K562 (cell line): ENCODE measurements at regions of chr19 and their contacts with region 1.

Region 1: GRCh38 chr19:2475702-2476450 is at the start of gene GADD45B:
- DNase-seq: peak; percentile 97 to 100 (median 98)
- ATAC-seq: peak; percentile 88
- H3K4me3 ChIP-seq: peak within 1 kb of the TSS; percentile 49
- H3K27ac ChIP-seq: peak within 1 kb of the TSS; percentile 25; the same call in 1 of the 3 replicates
- H3K4me1 ChIP-seq: peaks cover 2 to 46% of the 10 kb centered on the region in 2 experiments; a peak in 4 of 5 replicates
- H3K27me3 ChIP-seq: peaks cover 0 to 9% of the 10 kb centered on the region in 2 experiments; a peak in 2 of 5 replicates
- CTCF ChIP-seq: no peak
- EP300 ChIP-seq: no peak
- POLR2A ChIP-seq: peak; percentile 99
- RAD21 ChIP-seq: peak; percentile 11 to 20; a peak in 2 of 4 replicates
- polyA plus RNA-seq, gene GADD45B: 0.06 to 0.18 TPM

Region 2: DNA sequence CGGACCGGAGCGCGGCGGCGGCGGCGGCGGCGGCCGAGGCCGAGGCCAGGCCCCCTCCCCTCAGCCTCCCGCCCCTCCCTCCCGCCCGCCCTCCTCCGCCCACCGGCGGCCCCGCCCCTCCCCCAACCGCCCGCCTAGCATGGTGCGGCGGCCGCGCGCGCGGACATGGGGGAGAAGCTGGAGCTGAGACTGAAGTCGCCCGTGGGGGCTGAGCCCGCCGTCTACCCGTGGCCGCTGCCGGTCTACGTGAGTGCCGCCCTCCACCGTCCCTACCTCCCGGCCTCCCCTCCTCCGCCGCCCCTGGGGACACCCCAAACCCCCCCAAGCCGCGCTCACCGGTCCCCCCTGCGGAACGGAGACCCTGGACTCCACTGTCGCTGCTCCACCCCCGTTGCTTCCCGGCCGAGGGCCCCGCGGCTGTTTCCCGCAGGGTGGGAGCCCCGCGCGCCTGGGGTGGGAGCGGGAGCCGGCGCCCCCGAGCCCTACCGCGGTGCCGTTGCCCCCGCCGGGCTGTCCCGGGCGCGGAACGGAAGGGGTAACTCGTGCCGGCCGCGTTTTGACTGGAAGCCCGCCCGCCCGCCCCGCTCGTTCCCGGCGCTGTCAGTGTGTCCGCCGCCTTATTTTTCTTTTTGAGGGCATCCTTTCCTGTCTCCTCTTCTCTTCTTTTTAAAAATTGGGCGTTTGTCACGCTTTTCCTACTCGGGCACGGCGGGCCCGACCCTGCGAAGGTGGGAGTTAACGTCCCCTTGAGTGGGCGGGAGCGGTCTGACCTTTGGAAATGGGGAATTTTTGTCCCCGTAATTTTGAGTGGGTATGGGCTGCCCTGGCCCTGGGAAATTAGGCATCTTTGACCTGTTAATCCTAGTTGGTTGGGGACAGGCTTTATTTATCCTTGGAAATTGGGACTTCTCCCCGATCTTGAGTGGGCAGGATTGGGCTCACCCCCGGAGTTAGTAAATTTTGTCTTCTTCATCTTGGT is 311.6 kb before region 1 on chr19:
- CTCF ChIA-PET with region 1: no interaction called
- POLR2A ChIA-PET with region 1: no interaction called
- in situ Hi-C with region 1: no loop called
- intact Hi-C with region 1: no loop called
- DNase-seq: peak in 2 of 4 experiments; percentile 23 to 45
- ATAC-seq: peak; percentile 2
- H3K4me3 ChIP-seq: peak overlapping the region; percentile 100
- H3K27ac ChIP-seq: peak overlapping the region; percentile 98
- H3K4me1 ChIP-seq: peaks cover 42 to 74% of the 10 kb centered on the region in 2 experiments
- H3K27me3 ChIP-seq: no peaks in the 10 kb centered on the region
- CTCF ChIP-seq: no peak
- EP300 ChIP-seq: no peak
- POLR2A ChIP-seq: peak; percentile 53
- RAD21 ChIP-seq: no peak

Region 3: DNA sequence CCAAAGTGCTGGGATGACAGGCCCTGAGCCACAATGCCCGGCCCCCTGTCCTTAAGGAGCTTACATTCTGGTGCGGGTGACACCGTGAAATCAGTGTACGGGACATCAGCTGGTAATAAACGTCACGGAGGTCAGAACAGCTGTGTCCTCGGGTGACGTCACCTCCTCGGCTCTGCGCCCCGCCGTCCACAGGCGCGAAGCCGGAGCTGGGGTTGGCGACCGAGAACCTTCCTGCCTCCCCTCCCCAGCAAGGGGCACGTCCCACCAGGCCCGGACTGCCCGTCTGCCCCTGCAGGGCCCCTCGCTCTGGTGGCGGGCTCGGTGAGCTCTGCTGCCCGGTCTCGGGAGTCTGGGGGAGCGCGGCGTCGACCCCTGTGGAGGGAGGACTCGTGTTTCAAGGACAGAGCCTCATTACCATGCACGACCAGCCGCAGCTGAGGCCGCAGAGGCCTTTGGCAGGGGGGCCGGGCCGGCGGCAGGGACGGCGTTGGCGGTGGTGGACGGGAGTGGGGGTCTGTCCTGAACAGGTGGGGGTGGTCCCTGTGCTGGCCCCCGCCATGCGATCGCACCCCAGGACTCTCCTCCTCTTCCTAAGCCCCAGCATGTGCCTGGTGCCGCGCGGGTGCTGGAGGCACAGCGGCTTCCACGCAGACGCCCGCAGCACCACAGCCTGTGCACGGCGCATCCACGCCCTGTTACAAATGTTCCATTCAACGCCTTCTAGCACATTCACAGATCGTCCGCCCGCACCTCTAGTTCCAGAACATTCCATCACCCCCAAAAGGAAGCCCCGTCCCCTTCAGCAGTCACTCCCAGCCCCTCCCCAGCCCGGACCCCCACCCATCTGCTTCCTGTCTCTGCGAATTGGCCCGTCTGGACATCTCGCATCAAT is 173.3 kb before region 1 on chr19:
- CTCF ChIA-PET with region 1: no interaction called
- POLR2A ChIA-PET with region 1: no interaction called
- in situ Hi-C with region 1: no loop called
- intact Hi-C with region 1: no loop called
- DNase-seq: peak; percentile 42 to 65 (median 51)
- ATAC-seq: peak; percentile 55
- H3K4me3 ChIP-seq: no peak overlapping the region
- H3K27ac ChIP-seq: no peak overlapping the region
- H3K4me1 ChIP-seq: peaks cover 6 to 46% of the 10 kb centered on the region in 2 experiments; a peak in 4 of 5 replicates
- H3K27me3 ChIP-seq: peaks cover 0 to 13% of the 10 kb centered on the region in 2 experiments; a peak in 2 of 5 replicates
- CTCF ChIP-seq: no peak
- EP300 ChIP-seq: no peak
- POLR2A ChIP-seq: no peak
- RAD21 ChIP-seq: no peak

Region 4: DNA sequence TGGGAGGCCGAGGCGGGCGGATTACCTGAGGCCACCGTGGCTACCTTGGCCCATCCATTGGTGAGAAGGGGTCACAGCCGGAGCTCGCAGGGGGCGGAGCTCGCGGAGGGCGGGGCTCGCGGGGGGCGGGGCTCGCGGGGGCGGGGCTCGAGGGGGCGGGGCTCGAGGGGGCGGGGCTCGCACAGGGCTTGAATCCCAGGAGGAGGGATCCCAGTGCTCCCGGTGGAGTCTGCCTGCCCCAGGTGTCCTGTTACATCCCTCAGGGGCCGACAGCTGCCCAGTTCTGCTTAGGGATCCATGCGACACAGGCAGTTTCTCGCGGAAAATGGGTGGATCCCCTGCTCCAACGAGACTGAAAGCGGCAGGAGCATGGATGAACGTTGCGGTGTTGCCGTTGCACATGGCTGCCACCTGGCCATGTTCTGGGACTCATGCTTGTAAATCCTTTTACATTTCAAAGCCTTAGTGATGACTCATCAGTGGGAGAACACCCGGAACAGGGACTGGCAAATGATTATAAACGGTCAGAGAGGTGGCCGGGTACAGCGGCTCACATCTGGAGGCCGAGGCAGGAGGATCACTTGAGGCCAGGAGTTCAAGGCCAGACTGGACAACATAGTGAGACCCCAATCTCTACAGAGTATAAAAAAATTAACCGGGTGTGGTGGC is 90.7 kb before region 1 on chr19:
- CTCF ChIA-PET with region 1: no interaction called
- POLR2A ChIA-PET with region 1: no interaction called
- in situ Hi-C with region 1: no loop called
- intact Hi-C with region 1: no loop called
- DNase-seq: peak; percentile 77 to 95 (median 94)
- ATAC-seq: peak; percentile 80
- H3K4me3 ChIP-seq: peak overlapping the region; percentile 38
- H3K27ac ChIP-seq: peak overlapping the region; percentile 65; the same call in 2 of the 3 replicates
- H3K4me1 ChIP-seq: peaks cover 6 to 21% of the 10 kb centered on the region in 2 experiments; a peak in 4 of 5 replicates
- H3K27me3 ChIP-seq: no peaks in the 10 kb centered on the region
- CTCF ChIP-seq: no peak
- EP300 ChIP-seq: no peak
- POLR2A ChIP-seq: no peak; the same call in 1 of the 2 replicates
- RAD21 ChIP-seq: peak in 1 of 2 experiments; percentile 20; a peak in 1 of 4 replicates

Region 5: GRCh38 chr19:2455851-2456570 is 19.9 kb before region 1 on chr19:
- CTCF ChIA-PET with region 1: no interaction called
- POLR2A ChIA-PET with region 1: interaction called, 20 read pairs
- in situ Hi-C with region 1: no loop called
- intact Hi-C with region 1: no loop called
- DNase-seq: peak; percentile 66 to 76 (median 72)
- ATAC-seq: peak; percentile 79
- H3K4me3 ChIP-seq: peak overlapping the region; percentile 100
- H3K27ac ChIP-seq: peak overlapping the region; percentile 90
- H3K4me1 ChIP-seq: peaks cover 5 to 49% of the 10 kb centered on the region in 2 experiments; a peak in 3 of 5 replicates
- H3K27me3 ChIP-seq: no peaks in the 10 kb centered on the region
- CTCF ChIP-seq: no peak
- EP300 ChIP-seq: no peak
- POLR2A ChIP-seq: no peak
- RAD21 ChIP-seq: no peak

Region 6: DNA sequence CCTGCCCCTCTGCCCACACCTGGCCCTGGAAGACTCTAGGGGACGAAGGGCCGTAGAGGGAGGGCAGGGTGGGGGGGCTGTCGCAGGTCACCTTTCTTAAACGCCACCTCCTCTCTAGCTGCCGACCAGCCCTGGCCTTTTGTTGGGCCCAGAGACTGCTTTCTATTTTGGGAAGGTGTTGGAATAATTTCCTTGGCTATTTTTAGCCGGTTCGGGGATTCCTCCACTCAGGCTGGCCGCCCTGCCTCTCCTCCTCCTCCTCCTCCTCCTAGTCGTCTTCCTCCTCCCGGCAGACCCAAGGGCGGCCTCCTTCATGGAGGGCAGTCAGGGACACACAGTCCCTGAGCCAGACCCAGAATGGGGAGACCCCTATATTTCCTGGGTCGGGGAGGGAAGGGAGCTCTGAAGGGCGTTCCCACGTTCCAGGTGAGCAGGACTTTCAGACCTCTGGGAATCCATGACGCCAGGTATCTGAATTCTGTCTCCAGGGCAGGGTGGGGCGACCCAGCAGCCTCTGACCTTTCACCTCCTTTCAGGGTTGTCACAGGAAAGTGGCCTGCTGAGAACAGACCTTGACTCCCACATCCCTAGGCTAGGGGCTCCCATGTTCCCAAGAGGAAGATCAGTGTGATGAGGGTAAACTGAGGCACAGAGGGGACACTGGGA is 19.9 kb after region 1 on chr19:
- CTCF ChIA-PET with region 1: no interaction called
- POLR2A ChIA-PET with region 1: interaction called, 20 read pairs
- in situ Hi-C with region 1: no loop called
- intact Hi-C with region 1: no loop called
- DNase-seq: no peak
- ATAC-seq: no peak
- H3K4me3 ChIP-seq: no peak overlapping the region
- H3K27ac ChIP-seq: no peak overlapping the region
- H3K4me1 ChIP-seq: peaks cover 5 to 28% of the 10 kb centered on the region in 2 experiments; a peak in 4 of 5 replicates
- H3K27me3 ChIP-seq: peaks cover 28 to 57% of the 10 kb centered on the region in 2 experiments
- CTCF ChIP-seq: no peak
- EP300 ChIP-seq: no peak
- POLR2A ChIP-seq: no peak
- RAD21 ChIP-seq: no peak

Region 7: GRCh38 chr19:2517868-2518625 is 42.2 kb after region 1 on chr19:
- CTCF ChIA-PET with region 1: no interaction called
- POLR2A ChIA-PET with region 1: no interaction called
- in situ Hi-C with region 1: no loop called
- intact Hi-C with region 1: no loop called
- DNase-seq: no peak
- ATAC-seq: no peak
- H3K4me3 ChIP-seq: no peak overlapping the region
- H3K27ac ChIP-seq: no peak overlapping the region
- H3K4me1 ChIP-seq: peaks cover 0 to 35% of the 10 kb centered on the region in 2 experiments; a peak in 3 of 5 replicates
- H3K27me3 ChIP-seq: peaks cover 10 to 42% of the 10 kb centered on the region in 2 experiments; a peak in 4 of 5 replicates
- CTCF ChIP-seq: no peak
- EP300 ChIP-seq: no peak
- POLR2A ChIP-seq: no peak
- RAD21 ChIP-seq: no peak

Region 8: DNA sequence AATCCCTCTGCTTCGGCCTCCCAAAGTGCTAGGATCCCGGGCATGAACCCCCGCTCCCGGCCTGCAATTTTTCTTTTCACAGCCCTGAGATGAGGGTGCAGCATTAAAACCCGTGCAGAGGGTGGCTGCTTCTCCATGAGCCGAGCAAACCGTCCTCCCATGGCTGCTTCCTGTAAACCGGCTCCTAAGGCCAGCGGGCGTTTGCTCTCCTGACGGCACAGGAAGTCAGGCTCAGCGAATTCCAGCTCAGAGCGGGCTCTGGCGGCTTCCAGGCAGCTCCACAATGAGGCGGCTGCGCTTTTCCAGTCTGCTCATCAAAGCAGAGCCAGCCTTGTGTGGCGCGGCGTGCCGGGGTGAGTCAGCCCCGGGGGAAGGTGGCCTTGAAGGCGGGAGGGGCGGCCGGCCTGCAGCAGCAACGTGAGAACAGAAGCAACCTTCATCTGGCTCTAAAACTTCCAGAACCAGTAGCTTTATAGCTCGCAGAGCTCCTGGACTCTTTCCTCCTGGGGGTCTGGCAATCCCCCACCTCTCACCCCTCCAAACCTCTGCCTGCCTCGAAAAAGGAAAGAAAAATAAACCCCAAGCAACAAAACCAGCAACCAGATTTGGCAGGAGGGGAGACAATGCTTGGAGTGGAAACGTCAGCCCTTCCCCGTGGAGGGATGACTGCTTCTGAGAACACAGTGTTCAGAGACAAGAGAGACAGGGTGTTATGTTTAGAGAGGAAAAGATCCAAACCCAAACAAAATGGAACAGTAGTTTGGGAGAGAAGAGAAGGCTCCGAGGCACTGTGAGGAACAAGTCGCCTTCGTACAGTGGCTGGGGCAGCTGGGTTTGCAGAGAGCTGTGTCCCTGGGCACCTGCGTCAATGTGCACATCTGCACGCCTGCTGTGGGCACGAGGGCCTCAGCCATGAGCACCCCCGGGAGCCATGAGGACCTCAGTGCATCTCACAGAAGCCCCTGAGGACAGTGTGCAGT is 67.9 kb after region 1 on chr19:
- CTCF ChIA-PET with region 1: interaction called, 5 read pairs
- POLR2A ChIA-PET with region 1: interaction called, 11 read pairs
- in situ Hi-C with region 1: no loop called
- intact Hi-C with region 1: loop called (anchors 2 kb)
- DNase-seq: peak; percentile 65 to 75 (median 67)
- ATAC-seq: peak; percentile 94
- H3K4me3 ChIP-seq: no peak overlapping the region
- H3K27ac ChIP-seq: peak overlapping the region; percentile 23; the same call in 1 of the 3 replicates
- H3K4me1 ChIP-seq: peaks cover 4 to 31% of the 10 kb centered on the region in 2 experiments; a peak in 4 of 5 replicates
- H3K27me3 ChIP-seq: 0 out of 5 replicates have a peak, but pooled peaks cover 0 to 8% of the 10 kb centered on the region in 2 experiments
- CTCF ChIP-seq: peak in 2 of 3 experiments; percentile 12 to 38; a peak in 1 of 6 replicates
- EP300 ChIP-seq: no peak
- POLR2A ChIP-seq: no peak
- RAD21 ChIP-seq: peak; percentile 54 to 69; a peak in 3 of 4 replicates

Region 9: GRCh38 chr19:2578901-2579677 is 103.2 kb after region 1 on chr19:
- CTCF ChIA-PET with region 1: interaction called, 47 read pairs
- POLR2A ChIA-PET with region 1: interaction called, 26 read pairs
- in situ Hi-C with region 1: loop called (anchors 5 kb)
- intact Hi-C with region 1: loop called (anchors 1 kb)
- DNase-seq: peak; percentile 67 to 75 (median 71)
- ATAC-seq: peak; percentile 96
- H3K4me3 ChIP-seq: no peak overlapping the region
- H3K27ac ChIP-seq: no peak overlapping the region
- H3K4me1 ChIP-seq: peaks cover 0 to 24% of the 10 kb centered on the region in 2 experiments; a peak in 2 of 5 replicates
- H3K27me3 ChIP-seq: peaks cover 0 to 34% of the 10 kb centered on the region in 2 experiments; a peak in 3 of 5 replicates
- CTCF ChIP-seq: peak; percentile 86 to 89 (median 87)
- EP300 ChIP-seq: no peak
- POLR2A ChIP-seq: no peak
- RAD21 ChIP-seq: peak; percentile 96 to 98

Region 10: GRCh38 chr19:2610637-2611482 is 135.0 kb after region 1 on chr19:
- CTCF ChIA-PET with region 1: interaction called, 30 read pairs
- POLR2A ChIA-PET with region 1: interaction called, 10 read pairs
- in situ Hi-C with region 1: loop called (anchors 5 kb)
- intact Hi-C with region 1: loop called (anchors 1 kb)
- DNase-seq: peak; percentile 83 to 87 (median 87)
- ATAC-seq: peak; percentile 97
- H3K4me3 ChIP-seq: peak overlapping the region; percentile 41
- H3K27ac ChIP-seq: no peak overlapping the region
- H3K4me1 ChIP-seq: peaks cover 0 to 25% of the 10 kb centered on the region in 2 experiments; a peak in 2 of 5 replicates
- H3K27me3 ChIP-seq: peaks cover 18 to 49% of the 10 kb centered on the region in 2 experiments; a peak in 4 of 5 replicates
- CTCF ChIP-seq: peak; percentile 87 to 93 (median 91)
- EP300 ChIP-seq: no peak
- POLR2A ChIP-seq: no peak
- RAD21 ChIP-seq: peak; percentile 92 to 96